ENCODE measurements at regions of chr1 and their contacts with region 1.

Region 1: DNA sequence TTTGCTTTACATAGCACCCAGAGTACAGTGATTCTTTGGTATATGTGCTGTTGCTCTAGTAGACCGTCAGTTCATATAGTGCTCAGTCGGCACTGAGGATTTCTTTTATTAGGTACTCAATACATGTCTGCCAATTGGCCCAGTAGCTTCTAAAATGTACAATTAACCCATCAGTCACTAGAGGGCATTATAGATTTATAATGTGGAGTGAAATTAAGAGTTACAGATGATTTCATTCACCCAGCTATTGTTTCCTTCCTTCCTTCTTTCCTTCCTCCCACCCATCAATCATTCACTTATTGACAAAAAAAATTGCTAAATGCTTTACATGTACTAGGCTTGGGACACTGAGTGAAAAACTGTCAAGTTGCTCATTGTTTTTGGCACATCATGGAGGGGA is 263.6 kb upstream of the USP24 start:
- DNase-seq: no peak
- ATAC-seq: no peak; the same call in 1 of the 2 replicates
- H3K4me3 Mint-ChIP-seq: no peak overlapping the region
- H3K27ac Mint-ChIP-seq: no peak overlapping the region
- H3K4me1 Mint-ChIP-seq: no peaks in the 10 kb centered on the region
- H3K27me3 Mint-ChIP-seq: no peaks in the 10 kb centered on the region; the same call in 1 of the 2 replicates
- CTCF ChIP-seq: no peak

Region 2: DNA sequence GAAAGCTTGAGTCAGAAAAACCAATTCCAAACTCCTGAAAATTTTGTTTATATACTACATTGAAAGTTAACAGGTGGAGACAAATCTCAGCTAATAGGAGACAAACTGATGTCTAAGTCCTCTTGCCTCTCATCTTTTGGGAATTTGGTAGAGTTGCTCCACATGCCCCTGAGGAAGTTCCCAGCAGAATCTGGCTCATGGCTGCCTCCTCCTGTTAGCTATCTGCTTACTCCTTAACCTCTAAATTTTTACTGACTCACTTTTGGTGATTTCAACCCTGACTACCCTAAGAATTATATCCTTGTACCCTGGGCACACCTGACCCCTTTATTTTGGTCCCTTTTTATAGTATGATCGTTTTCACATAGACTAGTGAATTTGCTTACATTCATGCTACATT is 370.2 kb after region 1 on chr1:
- CTCF ChIA-PET with region 1: interaction called, 10 read pairs
- POLR2A ChIA-PET with region 1: no interaction called
- DNase-seq: peak; percentile 48
- ATAC-seq: peak; percentile 76
- H3K4me3 Mint-ChIP-seq: no peak overlapping the region
- H3K27ac Mint-ChIP-seq: no peak overlapping the region
- H3K4me1 Mint-ChIP-seq: no peaks in the 10 kb centered on the region
- H3K27me3 Mint-ChIP-seq: no peaks in the 10 kb centered on the region
- CTCF ChIP-seq: no peak

Measured in WTC11 (cell line).